GM12878 (cell line): ENCODE measurements at regions of chr9 and their contacts with region 1.

Region 1: DNA sequence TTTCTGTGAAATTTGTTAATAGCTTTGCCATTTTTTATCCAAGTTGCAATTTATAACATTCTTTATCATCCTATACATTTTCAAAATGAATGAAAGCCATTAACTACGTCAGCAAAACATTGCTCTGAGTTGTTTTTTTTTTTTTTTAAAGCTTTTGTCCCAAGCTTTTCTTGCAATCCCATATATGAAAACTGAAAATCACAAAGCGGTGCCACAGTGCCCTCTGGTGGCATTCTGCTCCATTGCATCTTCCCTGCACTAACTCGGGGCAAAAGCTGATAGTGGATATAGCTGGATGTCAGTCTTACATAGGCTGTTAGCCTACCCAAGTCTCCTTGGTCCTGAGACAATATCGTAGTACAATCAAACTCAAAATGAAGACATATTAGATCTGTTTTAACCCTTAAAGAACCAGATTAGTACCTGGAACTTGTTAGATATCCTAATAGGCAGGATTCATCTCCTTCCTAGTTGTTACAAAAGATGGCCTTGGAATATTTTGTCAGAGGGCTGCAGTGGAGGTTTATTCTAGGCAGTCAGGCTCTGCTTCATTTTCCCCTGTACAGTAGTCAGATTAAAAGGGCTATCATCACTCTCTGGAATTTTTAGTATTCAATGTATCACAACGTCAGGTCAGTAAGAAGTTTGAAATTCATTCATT is 669.9 kb downstream of the PTPRD start:
- DNase-seq: peak; percentile 13
- ATAC-seq: peak; percentile 84
- H3K4me3 ChIP-seq: no peak overlapping the region
- H3K27ac ChIP-seq: no peak overlapping the region
- H3K4me1 ChIP-seq: no peaks in the 10 kb centered on the region
- H3K27me3 ChIP-seq: no peaks in the 10 kb centered on the region
- CTCF ChIP-seq: peak; percentile 86 to 94 (median 88); a peak in 5 of 6 replicates
- EP300 ChIP-seq: no peak
- POLR2A ChIP-seq: no peak
- RAD21 ChIP-seq: peak; percentile 81

Region 2: GRCh38 chr9:9603345-9603744 is 339.5 kb before region 1 on chr9:
- CTCF ChIA-PET with region 1: interaction called, 64 read pairs
- POLR2A ChIA-PET with region 1: no interaction called
- RAD21 ChIA-PET with region 1: interaction called, 36 read pairs
- SMC1A ChIA-PET with region 1: interaction called, 18 read pairs
- in situ Hi-C with region 1: loop called (anchors 10 kb)
- intact Hi-C with region 1: loop called (anchors 1 kb)
- DNase-seq: no peak
- ATAC-seq: peak; percentile 28; the same call in 1 of the 3 replicates
- H3K4me3 ChIP-seq: no peak overlapping the region
- H3K27ac ChIP-seq: no peak overlapping the region
- H3K4me1 ChIP-seq: no peaks in the 10 kb centered on the region
- H3K27me3 ChIP-seq: no peaks in the 10 kb centered on the region
- CTCF ChIP-seq: no peak
- EP300 ChIP-seq: no peak
- POLR2A ChIP-seq: no peak
- RAD21 ChIP-seq: no peak

Region 3: GRCh38 chr9:9790216-9790872 is 152.6 kb before region 1 on chr9:
- CTCF ChIA-PET with region 1: interaction called, 18 read pairs
- POLR2A ChIA-PET with region 1: no interaction called
- RAD21 ChIA-PET with region 1: interaction called, 13 read pairs
- SMC1A ChIA-PET with region 1: interaction called, 12 read pairs
- in situ Hi-C with region 1: no loop called
- intact Hi-C with region 1: no loop called
- DNase-seq: no peak
- ATAC-seq: peak; percentile 74
- H3K4me3 ChIP-seq: no peak overlapping the region
- H3K27ac ChIP-seq: no peak overlapping the region
- H3K4me1 ChIP-seq: no peaks in the 10 kb centered on the region
- H3K27me3 ChIP-seq: no peaks in the 10 kb centered on the region
- CTCF ChIP-seq: peak; percentile 67 to 74 (median 71)
- EP300 ChIP-seq: no peak
- POLR2A ChIP-seq: no peak
- RAD21 ChIP-seq: peak; percentile 89

Region 4: GRCh38 chr9:9924376-9924775 is 18.5 kb before region 1 on chr9:
- CTCF ChIA-PET with region 1: interaction called, 21 read pairs
- POLR2A ChIA-PET with region 1: no interaction called
- RAD21 ChIA-PET with region 1: no interaction called
- SMC1A ChIA-PET with region 1: interaction called, 7 read pairs
- in situ Hi-C with region 1: no loop called
- intact Hi-C with region 1: no loop called
- DNase-seq: no peak
- ATAC-seq: no peak
- H3K4me3 ChIP-seq: no peak overlapping the region
- H3K27ac ChIP-seq: no peak overlapping the region
- H3K4me1 ChIP-seq: no peaks in the 10 kb centered on the region
- H3K27me3 ChIP-seq: no peaks in the 10 kb centered on the region
- CTCF ChIP-seq: no peak
- EP300 ChIP-seq: no peak
- POLR2A ChIP-seq: no peak
- RAD21 ChIP-seq: no peak

Region 5: GRCh38 chr9:9973062-9973461 is 30.2 kb after region 1 on chr9:
- CTCF ChIA-PET with region 1: interaction called, 13 read pairs
- POLR2A ChIA-PET with region 1: no interaction called
- RAD21 ChIA-PET with region 1: no interaction called
- SMC1A ChIA-PET with region 1: interaction called, 3 read pairs
- in situ Hi-C with region 1: no loop called
- intact Hi-C with region 1: no loop called
- DNase-seq: no peak
- ATAC-seq: no peak
- H3K4me3 ChIP-seq: no peak overlapping the region
- H3K27ac ChIP-seq: no peak overlapping the region
- H3K4me1 ChIP-seq: no peaks in the 10 kb centered on the region
- H3K27me3 ChIP-seq: no peaks in the 10 kb centered on the region
- CTCF ChIP-seq: no peak
- EP300 ChIP-seq: no peak
- POLR2A ChIP-seq: no peak
- RAD21 ChIP-seq: no peak

Region 6: DNA sequence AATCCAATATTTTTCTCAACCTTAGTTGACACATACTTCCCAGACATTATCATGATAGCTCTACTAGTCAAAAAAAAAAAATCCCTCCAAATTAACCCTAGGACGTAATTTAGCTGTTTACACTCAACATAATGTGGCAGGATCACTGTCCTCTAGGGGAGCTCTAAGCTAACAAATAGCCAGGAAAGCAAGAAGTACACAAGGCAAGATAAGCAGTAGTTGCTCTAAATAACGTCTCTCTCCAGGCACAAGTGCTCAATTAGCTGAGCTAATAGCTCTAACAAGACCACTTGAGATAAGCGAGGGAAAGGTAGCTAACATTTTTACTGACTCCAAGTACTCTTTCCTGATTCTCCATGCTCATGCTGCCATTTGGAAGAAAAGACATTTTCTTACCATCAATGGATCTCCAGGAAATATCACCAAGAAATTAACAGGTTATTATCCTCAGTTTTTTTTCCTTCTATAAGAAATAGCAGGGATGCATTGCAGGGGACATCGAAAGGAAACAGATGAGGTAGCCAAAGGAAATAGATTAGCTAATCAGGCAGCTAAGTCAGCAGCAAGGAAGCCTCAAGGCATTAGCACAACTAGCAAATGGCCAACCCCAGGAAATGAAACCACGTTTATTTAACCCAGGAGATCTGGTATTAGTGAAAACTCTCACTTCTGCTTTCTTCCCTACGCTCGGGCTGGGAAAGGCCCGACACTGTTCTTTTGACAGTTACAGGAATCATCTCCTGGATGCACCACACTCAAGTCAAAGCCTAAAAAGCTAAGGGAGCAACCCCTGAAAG is 55.8 kb after region 1 on chr9:
- CTCF ChIA-PET with region 1: interaction called, 12 read pairs
- POLR2A ChIA-PET with region 1: no interaction called
- RAD21 ChIA-PET with region 1: no interaction called
- SMC1A ChIA-PET with region 1: no interaction called
- in situ Hi-C with region 1: no loop called
- intact Hi-C with region 1: no loop called
- DNase-seq: no peak
- ATAC-seq: peak; percentile 70
- H3K4me3 ChIP-seq: no peak overlapping the region
- H3K27ac ChIP-seq: no peak overlapping the region
- H3K4me1 ChIP-seq: no peaks in the 10 kb centered on the region
- H3K27me3 ChIP-seq: no peaks in the 10 kb centered on the region
- CTCF ChIP-seq: peak in 2 of 3 experiments; percentile 20 to 33; a peak in 2 of 6 replicates
- EP300 ChIP-seq: no peak
- POLR2A ChIP-seq: no peak
- RAD21 ChIP-seq: no peak

Region 7: GRCh38 chr9:10331157-10331556 is 388.3 kb after region 1 on chr9:
- CTCF ChIA-PET with region 1: no interaction called
- POLR2A ChIA-PET with region 1: no interaction called
- RAD21 ChIA-PET with region 1: no interaction called
- SMC1A ChIA-PET with region 1: no interaction called
- in situ Hi-C with region 1: no loop called
- intact Hi-C with region 1: no loop called
- DNase-seq: no peak
- ATAC-seq: no peak
- H3K4me3 ChIP-seq: no peak overlapping the region
- H3K27ac ChIP-seq: no peak overlapping the region
- H3K4me1 ChIP-seq: no peaks in the 10 kb centered on the region
- H3K27me3 ChIP-seq: no peaks in the 10 kb centered on the region
- CTCF ChIP-seq: no peak
- EP300 ChIP-seq: no peak
- POLR2A ChIP-seq: no peak
- RAD21 ChIP-seq: no peak